Activated B cell treated with CpG ODN at 0.5 μM for 24 hours (primary cell): ENCODE measurements at regions of chr5 and their contacts with region 1.

Region 1: GRCh38 chr5:181260387-181261319 is at the start of gene TRIM52:
- DNase-seq: peak; percentile 86
- ATAC-seq: peak; percentile 80
- H3K4me3 Mint-ChIP-seq: peak within 1 kb of the TSS; percentile 98
- H3K27ac Mint-ChIP-seq: peak within 1 kb of the TSS; percentile 96
- H3K4me1 Mint-ChIP-seq: peaks cover 49% of the 10 kb centered on the region
- H3K27me3 Mint-ChIP-seq: no peaks in the 10 kb centered on the region
- CTCF ChIP-seq: no peak
- total RNA-seq, gene TRIM52: 30.9 and 36.9 TPM in 2 replicates

Region 2: DNA sequence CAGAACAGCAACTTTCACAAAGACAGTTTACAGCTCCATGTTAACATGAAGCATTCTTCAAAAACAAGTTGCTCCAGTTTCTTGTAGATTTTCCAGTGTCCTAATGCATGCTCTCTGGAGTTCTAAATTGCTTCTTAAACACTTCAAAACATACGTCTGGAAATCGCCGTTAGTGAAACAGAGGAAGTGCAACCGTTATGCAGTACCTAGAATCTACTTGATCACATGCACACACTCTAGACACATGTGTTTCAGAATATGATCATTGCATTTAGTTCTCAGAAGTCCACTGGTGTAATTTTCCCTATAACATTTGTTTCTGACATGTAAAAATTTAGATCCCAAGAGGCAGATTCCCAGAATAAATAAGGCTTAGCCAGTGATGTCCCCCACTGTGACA is 1751.4 kb before region 1 on chr5:
- CTCF ChIA-PET with region 1: no interaction called
- POLR2A ChIA-PET with region 1: no interaction called
- intact Hi-C with region 1: no loop called
- DNase-seq: no peak
- ATAC-seq: no peak
- H3K4me3 Mint-ChIP-seq: no peak overlapping the region
- H3K27ac Mint-ChIP-seq: no peak overlapping the region
- H3K4me1 Mint-ChIP-seq: peaks cover 16% of the 10 kb centered on the region
- H3K27me3 Mint-ChIP-seq: no peaks in the 10 kb centered on the region
- CTCF ChIP-seq: no peak

Region 3: GRCh38 chr5:180291943-180292831 is 968.5 kb before region 1 on chr5 and contains the start of gene MAPK9:
- CTCF ChIA-PET with region 1: no interaction called
- POLR2A ChIA-PET with region 1: no interaction called
- intact Hi-C with region 1: loop called (anchors 5 kb)
- DNase-seq: peak; percentile 87
- ATAC-seq: peak; percentile 78
- H3K4me3 Mint-ChIP-seq: peak within 1 kb of the TSS; percentile 92
- H3K27ac Mint-ChIP-seq: peak within 1 kb of the TSS; percentile 89
- H3K4me1 Mint-ChIP-seq: peaks cover 33% of the 10 kb centered on the region
- H3K27me3 Mint-ChIP-seq: no peaks in the 10 kb centered on the region
- CTCF ChIP-seq: no peak
- total RNA-seq, gene MAPK9: 26.9 and 30.3 TPM in 2 replicates

Region 4: GRCh38 chr5:180411948-180412347 is 848.7 kb before region 1 on chr5:
- CTCF ChIA-PET with region 1: no interaction called
- POLR2A ChIA-PET with region 1: no interaction called
- intact Hi-C with region 1: no loop called
- DNase-seq: no peak
- ATAC-seq: no peak
- H3K4me3 Mint-ChIP-seq: no peak overlapping the region
- H3K27ac Mint-ChIP-seq: no peak overlapping the region
- H3K4me1 Mint-ChIP-seq: no peaks in the 10 kb centered on the region
- H3K27me3 Mint-ChIP-seq: no peaks in the 10 kb centered on the region
- CTCF ChIP-seq: no peak

Region 5: GRCh38 chr5:180831139-180832048 is 429.3 kb before region 1 on chr5:
- CTCF ChIA-PET with region 1: no interaction called
- POLR2A ChIA-PET with region 1: interaction called, 13 read pairs
- intact Hi-C with region 1: loop called (anchors 1 kb)
- DNase-seq: peak; percentile 82
- ATAC-seq: peak; percentile 83
- H3K4me3 Mint-ChIP-seq: peak overlapping the region; percentile 98
- H3K27ac Mint-ChIP-seq: peak overlapping the region; percentile 98
- H3K4me1 Mint-ChIP-seq: peaks cover 54% of the 10 kb centered on the region
- H3K27me3 Mint-ChIP-seq: no peaks in the 10 kb centered on the region
- CTCF ChIP-seq: no peak

Region 6: DNA sequence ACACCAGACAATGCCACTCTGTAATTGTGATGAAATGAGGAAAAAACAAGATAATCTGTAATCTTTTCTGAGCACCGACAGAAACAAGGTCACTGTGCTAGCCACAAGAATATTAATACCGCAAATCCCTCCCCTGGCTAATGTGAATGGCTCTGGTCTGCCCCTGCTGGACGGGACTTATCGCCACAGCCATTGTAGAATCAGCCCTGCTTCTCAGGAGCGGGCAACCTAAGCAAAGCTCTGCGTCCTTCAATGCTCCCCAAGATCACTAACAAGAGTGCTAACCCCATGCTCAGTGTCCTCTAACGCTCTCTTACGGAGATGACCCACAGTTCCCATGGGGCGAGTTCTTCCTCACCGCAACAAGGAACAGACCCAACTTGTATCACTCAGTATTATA is 172.4 kb before region 1 on chr5:
- CTCF ChIA-PET with region 1: no interaction called
- POLR2A ChIA-PET with region 1: no interaction called
- intact Hi-C with region 1: no loop called
- DNase-seq: no peak
- ATAC-seq: no peak
- H3K4me3 Mint-ChIP-seq: no peak overlapping the region
- H3K27ac Mint-ChIP-seq: no peak overlapping the region
- H3K4me1 Mint-ChIP-seq: no peaks in the 10 kb centered on the region
- H3K27me3 Mint-ChIP-seq: peaks cover 10% of the 10 kb centered on the region
- CTCF ChIP-seq: no peak

Region 7: DNA sequence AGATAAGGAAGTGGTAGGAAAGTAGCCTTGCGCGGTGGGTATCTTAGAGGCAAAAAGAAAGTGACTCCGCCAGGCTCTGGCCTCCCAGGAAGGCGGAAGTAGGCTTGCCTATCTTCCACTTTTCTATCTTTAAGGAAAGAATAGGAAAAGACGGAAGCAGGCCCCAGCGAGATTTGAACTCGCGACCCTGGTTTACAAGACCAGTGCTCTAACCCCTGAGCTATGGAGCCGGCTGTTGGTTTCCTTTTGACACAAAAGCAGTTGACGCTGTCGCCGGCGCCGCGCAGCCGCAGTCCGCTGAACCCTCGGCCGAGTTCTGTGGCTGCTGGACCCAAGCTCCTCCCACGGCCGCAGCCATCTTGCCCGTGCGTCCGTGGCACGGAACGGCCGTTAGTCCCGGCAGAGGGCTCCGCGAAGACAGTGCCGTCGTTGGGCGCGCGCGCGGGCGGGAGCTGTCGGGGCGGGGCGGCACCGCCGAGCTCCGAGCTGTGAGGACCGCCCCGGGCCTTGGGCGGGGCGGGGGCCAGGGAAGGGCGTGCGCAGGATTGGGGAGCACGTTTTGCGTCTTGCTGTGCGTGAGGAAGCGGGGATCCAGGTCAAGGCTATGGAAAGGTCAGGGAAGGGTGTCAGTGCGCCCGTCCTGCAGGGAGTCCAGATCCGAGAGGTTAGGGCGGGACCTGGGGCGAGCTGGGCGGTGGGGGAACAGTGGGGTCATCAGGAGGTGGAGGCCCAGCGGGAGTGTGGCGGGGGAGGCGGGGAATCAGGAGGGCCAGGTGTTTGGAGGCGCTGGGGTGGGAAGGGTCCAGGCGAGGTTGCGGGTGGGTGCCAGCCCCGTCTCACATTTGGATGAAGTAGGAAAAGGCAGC is 68.9 kb before region 1 on chr5:
- CTCF ChIA-PET with region 1: interaction called, 5 read pairs
- POLR2A ChIA-PET with region 1: interaction called, 63 read pairs
- intact Hi-C with region 1: loop called (anchors 1 kb)
- DNase-seq: peak; percentile 99
- ATAC-seq: peak; percentile 63
- H3K4me3 Mint-ChIP-seq: peak overlapping the region; percentile 88
- H3K27ac Mint-ChIP-seq: peak overlapping the region; percentile 96
- H3K4me1 Mint-ChIP-seq: peaks cover 34% of the 10 kb centered on the region
- H3K27me3 Mint-ChIP-seq: peaks cover 11% of the 10 kb centered on the region
- CTCF ChIP-seq: no peak

Region 8: GRCh38 chr5:181223058-181223728 is 37.5 kb before region 1 on chr5 and contains the start of gene TRIM41:
- CTCF ChIA-PET with region 1: interaction called, 3 read pairs
- POLR2A ChIA-PET with region 1: interaction called, 127 read pairs
- intact Hi-C with region 1: loop called (anchors 1 kb)
- DNase-seq: peak; percentile 98
- ATAC-seq: peak; percentile 67
- H3K4me3 Mint-ChIP-seq: peak within 1 kb of the TSS; percentile 95
- H3K27ac Mint-ChIP-seq: peak within 1 kb of the TSS; percentile 98
- H3K4me1 Mint-ChIP-seq: peaks cover 51% of the 10 kb centered on the region
- H3K27me3 Mint-ChIP-seq: peaks cover 6% of the 10 kb centered on the region
- CTCF ChIP-seq: no peak
- total RNA-seq, gene TRIM41: 34.9 and 39.6 TPM in 2 replicates

Region 9: DNA sequence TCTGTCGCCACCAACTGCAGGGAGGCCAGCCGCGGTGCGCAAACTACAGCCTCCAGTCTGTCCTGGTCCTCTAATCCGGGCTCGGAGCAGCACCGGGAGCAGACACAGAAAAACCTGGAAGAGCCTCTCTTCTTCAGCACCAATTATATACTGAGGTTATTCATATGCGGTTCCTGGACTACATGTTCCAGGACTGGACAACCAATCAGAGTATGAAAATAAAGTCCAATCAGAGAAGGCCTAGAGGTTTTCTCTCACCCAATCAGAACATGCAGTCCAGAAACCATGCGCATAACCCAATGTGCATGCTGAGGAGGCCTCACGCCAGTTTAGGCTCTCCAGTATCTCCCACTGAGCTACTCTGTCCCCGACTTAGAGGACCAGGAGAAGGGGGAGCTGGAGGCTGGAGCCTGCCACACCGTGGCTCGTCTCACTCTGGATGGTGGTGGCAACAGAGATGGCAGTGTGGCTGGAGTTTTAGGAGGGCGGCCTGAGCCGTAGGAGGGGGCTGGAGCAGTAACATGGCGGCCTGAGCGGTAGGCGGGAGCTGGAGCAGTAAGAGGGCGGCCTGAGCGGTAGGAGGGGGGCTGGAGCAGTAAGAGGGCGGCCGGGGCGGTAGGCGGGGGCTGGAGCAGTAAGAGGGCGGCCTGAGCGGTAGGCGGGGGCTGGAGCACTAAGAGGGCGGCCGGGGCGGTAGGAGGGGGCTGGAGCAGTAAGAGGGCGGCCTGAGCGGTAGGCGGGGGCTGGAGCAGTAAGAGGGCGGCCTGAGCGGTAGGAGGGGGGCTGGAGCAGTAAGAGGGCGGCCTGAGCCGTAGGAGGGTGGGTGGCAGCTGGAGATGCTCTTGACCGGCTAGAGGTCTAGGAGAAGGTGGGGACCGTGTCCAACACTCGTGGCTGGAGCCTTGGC is 20.7 kb after region 1 on chr5:
- CTCF ChIA-PET with region 1: no interaction called
- POLR2A ChIA-PET with region 1: interaction called, 17 read pairs
- intact Hi-C with region 1: no loop called
- DNase-seq: no peak
- ATAC-seq: no peak
- H3K4me3 Mint-ChIP-seq: no peak overlapping the region
- H3K27ac Mint-ChIP-seq: no peak overlapping the region
- H3K4me1 Mint-ChIP-seq: peaks cover 2% of the 10 kb centered on the region
- H3K27me3 Mint-ChIP-seq: no peaks in the 10 kb centered on the region
- CTCF ChIP-seq: no peak